Calu3 (cell line): ENCODE measurements at regions of chr11 and their contacts with region 1.

Region 1: GRCh38 chr11:24515632-24516031 is 18.8 kb downstream of the LUZP2 start:
- DNase-seq: no peak
- H3K4me3 Mint-ChIP-seq: no peak overlapping the region
- H3K27ac Mint-ChIP-seq: no peak overlapping the region
- H3K4me1 Mint-ChIP-seq: peaks cover 34% of the 10 kb centered on the region
- H3K27me3 Mint-ChIP-seq: no peaks in the 10 kb centered on the region
- CTCF ChIP-seq: no peak

Region 2: DNA sequence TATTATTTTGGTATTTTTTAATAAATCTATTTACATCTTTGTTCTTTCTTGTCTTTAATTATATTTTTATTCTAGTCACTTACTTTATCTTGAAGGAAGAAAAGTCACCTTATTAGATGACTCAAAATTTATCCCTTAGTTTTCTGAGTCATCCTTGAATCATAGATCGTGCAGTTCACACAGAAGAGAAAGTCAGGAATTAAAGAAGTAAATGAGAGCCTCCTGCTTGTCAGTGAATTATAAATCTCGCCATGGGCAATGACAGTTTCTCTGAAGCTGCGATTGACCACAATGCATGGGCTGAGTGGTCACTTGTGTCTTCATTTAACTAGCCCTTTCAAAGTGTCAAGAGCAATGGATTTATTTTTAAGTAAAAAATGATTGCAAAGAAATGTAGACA is 72.4 kb after region 1 on chr11:
- CTCF ChIA-PET with region 1: no interaction called
- intact Hi-C with region 1: loop called (anchors 5 kb)
- DNase-seq: peak; percentile 2
- H3K4me3 Mint-ChIP-seq: peak overlapping the region; percentile 28
- H3K27ac Mint-ChIP-seq: peak overlapping the region; percentile 86
- H3K4me1 Mint-ChIP-seq: peaks cover 46% of the 10 kb centered on the region
- H3K27me3 Mint-ChIP-seq: no peaks in the 10 kb centered on the region
- CTCF ChIP-seq: no peak